Panc1 (cell line): ENCODE measurements at regions of chr9 and their contacts with region 1.

Region 1: DNA sequence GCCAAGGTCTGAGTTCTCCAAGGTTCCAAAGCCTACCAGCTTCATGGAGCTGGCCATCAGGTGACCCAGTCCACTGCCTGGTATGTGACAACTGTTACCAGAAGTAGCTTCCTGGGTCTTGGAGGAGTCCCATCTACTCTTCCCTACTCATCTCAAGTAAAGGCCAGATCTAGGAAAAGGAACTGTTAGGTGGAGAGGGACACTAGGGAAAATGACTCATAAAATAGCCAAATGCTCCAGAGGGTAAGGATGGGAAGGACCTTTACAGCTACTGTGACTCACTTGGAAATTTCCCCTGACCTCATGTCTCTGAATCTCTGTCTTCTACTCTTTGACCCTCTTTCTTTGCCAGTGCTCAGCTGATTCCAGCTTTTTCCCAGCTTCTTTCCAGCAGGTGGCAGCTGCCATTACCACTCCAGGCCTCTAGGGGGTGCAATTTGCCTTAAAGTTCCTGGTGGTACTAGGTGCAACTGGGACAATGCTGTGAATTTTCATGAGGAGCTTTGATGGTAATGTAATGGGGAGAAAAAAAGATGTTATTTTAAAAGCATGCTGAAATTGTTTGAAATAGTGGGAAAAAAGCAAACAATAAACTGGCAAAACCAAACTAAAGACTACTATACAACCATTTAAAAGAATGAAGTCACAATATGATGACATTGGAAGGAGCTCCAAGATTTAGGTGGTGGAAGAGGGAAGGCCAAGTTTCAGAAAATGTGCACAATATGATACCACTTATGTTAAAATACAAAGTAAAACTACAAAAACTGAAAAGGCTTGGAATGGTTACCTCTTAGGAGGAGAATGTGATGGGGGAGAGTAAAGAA is 27.1 kb upstream of the MYORG start:
- DNase-seq: peak; percentile 66
- ATAC-seq: peak; percentile 85
- H3K4me3 ChIP-seq: no peak overlapping the region
- H3K27ac ChIP-seq: no peak overlapping the region
- H3K4me1 ChIP-seq: no peaks in the 10 kb centered on the region
- H3K27me3 ChIP-seq: no peaks in the 10 kb centered on the region
- CTCF ChIP-seq: peak; percentile 98

Region 2: GRCh38 chr9:34332076-34332964 is 71.4 kb before region 1 on chr9:
- CTCF ChIA-PET with region 1: interaction called, 18 read pairs
- POLR2A ChIA-PET with region 1: no interaction called
- in situ Hi-C with region 1: no loop called
- intact Hi-C with region 1: no loop called
- DNase-seq: peak; percentile 30
- ATAC-seq: no peak
- H3K4me3 ChIP-seq: no peak overlapping the region
- H3K27ac ChIP-seq: no peak overlapping the region
- H3K4me1 ChIP-seq: peaks cover 24% of the 10 kb centered on the region
- H3K27me3 ChIP-seq: no peaks in the 10 kb centered on the region
- CTCF ChIP-seq: peak; percentile 75

Region 3: DNA sequence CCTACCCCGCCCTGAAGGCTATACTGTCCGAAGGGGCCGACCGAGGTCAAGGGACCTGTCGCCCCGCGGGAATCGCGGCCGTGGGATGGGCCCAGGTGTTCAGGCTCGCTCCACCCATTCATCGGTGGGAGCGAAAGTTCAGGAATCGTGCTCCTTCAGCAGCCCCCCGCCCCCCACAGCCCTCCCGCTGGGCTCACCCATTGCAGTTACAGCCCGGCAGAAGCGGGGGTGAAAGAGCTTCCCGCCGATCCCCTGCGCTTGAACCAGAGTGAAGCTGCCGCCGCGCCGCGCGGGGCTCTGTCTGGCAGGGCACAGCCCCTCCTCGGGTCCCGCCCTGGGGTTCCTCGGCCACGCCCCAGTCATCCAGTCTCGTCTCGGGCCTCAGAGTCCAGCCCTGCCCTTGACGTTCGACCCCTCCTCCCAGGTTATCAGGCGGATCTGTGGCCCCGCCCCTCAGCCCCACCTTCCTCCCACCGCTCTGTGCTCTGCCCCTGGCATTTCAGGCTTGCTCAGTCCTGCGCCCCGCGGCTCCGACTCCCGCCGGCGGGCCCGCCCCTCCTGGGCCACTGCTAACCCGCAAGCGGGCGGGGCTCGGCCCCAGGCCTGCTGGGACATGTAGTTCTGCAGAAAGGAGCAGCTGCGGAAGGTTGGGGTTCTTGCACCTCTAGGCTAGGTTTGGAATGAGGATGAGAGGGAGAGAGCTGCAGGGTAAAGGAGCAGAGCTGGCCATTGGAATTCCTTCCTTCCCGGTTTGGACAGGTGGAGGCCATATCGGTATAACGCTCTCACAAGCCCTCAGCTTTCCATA is 27.0 kb before region 1 on chr9 and contains the start of gene MYORG:
- CTCF ChIA-PET with region 1: interaction called, 10 read pairs
- POLR2A ChIA-PET with region 1: no interaction called
- in situ Hi-C with region 1: no loop called
- intact Hi-C with region 1: no loop called
- DNase-seq: peak; percentile 84
- ATAC-seq: peak; percentile 89
- H3K4me3 ChIP-seq: peak within 1 kb of the TSS; percentile 82 to 88
- H3K27ac ChIP-seq: peak within 1 kb of the TSS; percentile 58
- H3K4me1 ChIP-seq: peaks cover 21% of the 10 kb centered on the region
- H3K27me3 ChIP-seq: no peaks in the 10 kb centered on the region
- CTCF ChIP-seq: no peak
- total RNA-seq, gene MYORG: 9.7 TPM

Region 4: GRCh38 chr9:34500623-34501267 is 97.0 kb after region 1 on chr9:
- CTCF ChIA-PET with region 1: interaction called, 14 read pairs
- POLR2A ChIA-PET with region 1: no interaction called
- in situ Hi-C with region 1: no loop called
- intact Hi-C with region 1: loop called (anchors 2 kb)
- DNase-seq: peak; percentile 62
- ATAC-seq: peak; percentile 80
- H3K4me3 ChIP-seq: no peak overlapping the region
- H3K27ac ChIP-seq: no peak overlapping the region
- H3K4me1 ChIP-seq: peaks cover 14% of the 10 kb centered on the region
- H3K27me3 ChIP-seq: no peaks in the 10 kb centered on the region
- CTCF ChIP-seq: peak; percentile 99

Region 5: DNA sequence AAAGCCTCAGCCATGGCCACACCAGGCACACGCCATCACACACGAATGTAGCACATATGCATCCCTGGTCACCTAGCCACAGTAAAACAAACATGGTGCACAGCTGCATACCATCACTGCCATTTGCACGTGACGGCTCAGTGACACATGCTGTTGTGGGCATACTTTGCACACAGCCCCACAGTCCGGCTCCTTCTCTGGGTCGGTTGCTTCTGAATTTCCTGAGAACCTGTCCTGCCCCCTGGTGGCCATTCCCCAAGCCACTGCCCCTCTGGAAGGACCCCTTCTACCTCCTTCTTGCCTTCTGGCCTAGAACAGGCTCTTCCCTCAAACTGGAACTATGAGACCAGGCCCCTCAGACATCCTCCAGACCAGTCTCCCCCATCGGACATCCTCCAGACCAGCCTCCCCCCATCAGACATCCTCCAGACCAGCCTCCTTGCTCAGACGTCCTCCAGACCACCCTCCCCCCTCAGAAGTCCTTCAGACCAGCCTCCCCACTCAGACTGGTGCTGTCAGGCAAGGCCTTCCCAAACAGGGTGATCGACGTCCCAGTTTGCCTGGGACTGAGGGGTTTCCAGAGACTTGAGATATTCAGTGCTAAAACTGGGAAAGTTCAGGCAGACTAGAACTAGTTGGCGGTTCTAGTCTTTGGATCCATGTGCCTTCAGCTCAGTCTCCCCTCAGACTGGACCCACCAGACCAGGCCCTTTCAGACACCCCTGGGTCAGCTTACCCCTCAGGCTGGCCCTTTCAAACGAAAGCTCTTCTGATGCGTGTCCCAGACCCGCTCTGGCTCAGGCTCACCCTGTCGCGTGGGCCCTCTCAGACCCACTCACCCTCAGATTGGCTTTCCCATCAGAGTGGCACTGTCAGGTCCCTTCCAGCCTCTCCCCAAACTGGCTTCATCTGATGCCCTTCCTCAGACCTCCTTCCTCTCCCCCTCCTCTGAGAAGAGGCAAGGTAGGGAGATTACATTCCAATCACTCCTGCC is 143.4 kb after region 1 on chr9:
- CTCF ChIA-PET with region 1: interaction called, 12 read pairs
- POLR2A ChIA-PET with region 1: no interaction called
- in situ Hi-C with region 1: no loop called
- intact Hi-C with region 1: loop called (anchors 5 kb)
- DNase-seq: no peak
- ATAC-seq: peak; percentile 75
- H3K4me3 ChIP-seq: no peak overlapping the region
- H3K27ac ChIP-seq: no peak overlapping the region
- H3K4me1 ChIP-seq: no peaks in the 10 kb centered on the region
- H3K27me3 ChIP-seq: 0 out of 2 replicates have a peak, but pooled peaks cover 2% of the 10 kb centered on the region
- CTCF ChIP-seq: no peak

Region 6: GRCh38 chr9:34591248-34591916 is 187.6 kb after region 1 on chr9:
- CTCF ChIA-PET with region 1: interaction called, 21 read pairs
- POLR2A ChIA-PET with region 1: no interaction called
- in situ Hi-C with region 1: no loop called
- intact Hi-C with region 1: loop called (anchors 5 kb)
- DNase-seq: peak; percentile 33
- ATAC-seq: peak; percentile 91
- H3K4me3 ChIP-seq: peak overlapping the region in 1 of 2 experiments; percentile 17; a peak in 1 of 4 replicates
- H3K27ac ChIP-seq: no peak overlapping the region
- H3K4me1 ChIP-seq: peaks cover 10% of the 10 kb centered on the region
- H3K27me3 ChIP-seq: peaks cover 6% of the 10 kb centered on the region
- CTCF ChIP-seq: no peak

Region 7: DNA sequence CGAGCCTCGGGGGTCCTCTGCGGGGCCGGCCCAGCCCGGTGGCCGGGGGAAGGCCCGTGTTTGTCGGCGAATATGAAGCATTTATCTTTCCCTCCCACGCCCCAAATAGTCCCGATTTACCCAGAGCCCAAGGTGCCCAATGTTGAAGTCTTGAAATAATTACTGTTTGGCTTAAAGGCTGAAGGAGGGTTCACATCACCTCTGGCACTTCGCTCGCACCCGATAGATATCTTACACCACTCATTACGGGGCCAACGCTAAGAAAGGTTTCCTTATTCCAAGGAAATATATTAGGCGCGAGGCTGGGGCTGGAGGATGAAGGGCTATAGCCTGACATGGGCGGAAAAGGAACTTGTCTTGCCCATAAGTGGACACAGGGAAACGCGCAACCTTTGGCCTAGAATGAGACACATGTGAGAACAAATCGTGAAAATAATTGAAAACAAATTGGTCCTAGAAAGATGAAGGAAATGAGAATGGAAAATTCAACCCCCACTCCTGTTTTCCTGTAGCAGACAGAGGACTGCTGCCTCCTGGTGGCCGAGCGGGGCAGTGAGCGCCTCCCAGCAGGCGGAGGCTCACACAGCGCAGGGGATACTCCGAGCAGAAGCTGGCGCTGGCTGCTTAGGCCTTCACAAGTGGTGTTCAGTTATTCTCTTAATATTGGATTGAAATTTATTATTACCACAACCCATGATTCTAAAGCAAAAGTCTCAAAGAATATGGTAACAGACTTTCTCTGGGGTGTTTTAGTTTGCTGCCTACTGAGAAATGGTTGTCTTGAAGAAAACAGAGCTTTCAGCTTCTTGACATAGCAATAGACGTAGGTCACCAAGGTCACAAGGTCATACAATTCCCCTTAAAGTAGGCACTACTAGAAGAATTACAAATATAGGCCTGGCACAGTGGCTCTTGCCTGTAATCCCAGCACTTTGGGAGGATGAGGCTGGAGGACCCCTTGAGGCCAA is 298.3 kb after region 1 on chr9:
- CTCF ChIA-PET with region 1: no interaction called
- POLR2A ChIA-PET with region 1: no interaction called
- in situ Hi-C with region 1: no loop called
- intact Hi-C with region 1: no loop called
- DNase-seq: peak; percentile 62
- ATAC-seq: peak; percentile 93
- H3K4me3 ChIP-seq: peak overlapping the region; percentile 54 to 79
- H3K27ac ChIP-seq: peak overlapping the region; percentile 49; the same call in 1 of the 2 replicates
- H3K4me1 ChIP-seq: no peaks in the 10 kb centered on the region; the same call in 1 of the 2 replicates
- H3K27me3 ChIP-seq: no peaks in the 10 kb centered on the region; the same call in 1 of the 2 replicates
- CTCF ChIP-seq: peak; percentile 99